OCI-LY7 (cell line): ENCODE measurements at regions of chr14 and their contacts with region 1.

Region 1: GRCh38 chr14:35301735-35302528 is 9.8 kb downstream of the PSMA6 start:
- DNase-seq: peak; percentile 31
- H3K4me3 ChIP-seq: peak overlapping the region; percentile 16
- H3K27ac ChIP-seq: peak overlapping the region; percentile 52
- H3K4me1 ChIP-seq: peaks cover 46% of the 10 kb centered on the region
- CTCF ChIP-seq: no peak

Region 2: DNA sequence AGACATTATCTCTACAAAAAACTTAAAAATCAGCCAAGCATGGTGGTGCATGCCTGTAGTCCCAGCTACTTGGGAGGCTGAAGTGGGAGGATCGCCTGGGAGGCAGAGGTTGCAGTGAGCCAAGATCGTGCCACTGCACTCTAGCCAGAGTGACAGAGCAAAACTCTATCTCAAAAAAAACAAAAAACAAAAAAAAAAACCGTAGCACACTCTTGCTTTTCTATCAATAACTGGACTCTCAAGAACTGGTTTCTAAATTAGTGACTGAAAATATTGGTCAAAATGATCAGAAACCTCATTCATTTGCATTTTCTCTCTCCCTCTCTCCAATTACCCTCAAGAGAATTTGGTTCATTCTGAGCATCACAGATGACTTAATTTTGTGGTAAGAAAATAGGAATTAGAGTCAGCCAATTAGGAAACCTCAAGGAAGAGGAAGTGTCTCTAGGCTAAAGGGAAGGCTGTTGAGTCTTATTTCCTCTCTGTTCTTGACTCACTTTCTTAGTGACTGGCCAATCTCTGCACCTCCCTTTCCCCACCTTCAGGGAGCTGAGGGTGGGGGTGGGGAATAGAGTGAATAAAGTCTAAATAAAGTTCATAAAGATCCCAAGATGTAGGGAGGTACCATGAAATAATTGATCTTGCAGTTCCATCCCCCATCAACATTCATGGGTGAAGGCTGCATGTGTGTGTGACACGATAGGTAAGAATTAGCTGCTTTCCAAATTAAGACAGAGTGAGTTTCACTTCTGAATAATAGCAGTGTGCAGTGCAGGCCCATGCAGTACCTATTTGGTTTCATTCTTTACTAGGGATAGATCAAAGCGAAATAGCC is 16.5 kb before region 1 on chr14:
- CTCF ChIA-PET with region 1: no interaction called
- POLR2A ChIA-PET with region 1: interaction called, 15 read pairs
- intact Hi-C with region 1: no loop called
- DNase-seq: peak; percentile 81
- H3K4me3 ChIP-seq: peak overlapping the region; percentile 59
- H3K27ac ChIP-seq: peak overlapping the region; percentile 99
- H3K4me1 ChIP-seq: peaks cover 81% of the 10 kb centered on the region
- CTCF ChIP-seq: no peak

Region 3: DNA sequence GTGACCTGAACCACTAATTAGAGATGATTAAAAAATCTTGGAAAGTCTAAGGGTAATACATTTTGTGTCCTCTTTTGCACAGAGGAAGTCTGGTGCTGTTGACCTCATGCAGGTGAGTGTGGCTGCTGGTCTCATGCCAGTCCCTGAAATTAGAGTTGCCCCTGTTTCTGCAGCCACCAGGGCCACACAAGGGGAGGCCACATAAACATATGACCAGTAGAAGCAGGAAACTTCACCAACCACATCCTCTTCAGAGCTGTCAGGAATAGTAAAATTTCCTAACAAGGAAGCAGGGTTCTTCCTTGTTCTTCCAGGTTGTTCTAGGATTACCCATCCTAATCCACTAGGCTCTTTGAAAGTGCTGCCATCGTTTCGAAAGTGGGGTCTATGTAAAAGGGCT is 18.5 kb after region 1 on chr14:
- CTCF ChIA-PET with region 1: no interaction called
- POLR2A ChIA-PET with region 1: interaction called, 17 read pairs
- intact Hi-C with region 1: no loop called
- DNase-seq: no peak
- H3K4me3 ChIP-seq: no peak overlapping the region
- H3K27ac ChIP-seq: no peak overlapping the region
- H3K4me1 ChIP-seq: no peaks in the 10 kb centered on the region
- CTCF ChIP-seq: no peak

Region 4: DNA sequence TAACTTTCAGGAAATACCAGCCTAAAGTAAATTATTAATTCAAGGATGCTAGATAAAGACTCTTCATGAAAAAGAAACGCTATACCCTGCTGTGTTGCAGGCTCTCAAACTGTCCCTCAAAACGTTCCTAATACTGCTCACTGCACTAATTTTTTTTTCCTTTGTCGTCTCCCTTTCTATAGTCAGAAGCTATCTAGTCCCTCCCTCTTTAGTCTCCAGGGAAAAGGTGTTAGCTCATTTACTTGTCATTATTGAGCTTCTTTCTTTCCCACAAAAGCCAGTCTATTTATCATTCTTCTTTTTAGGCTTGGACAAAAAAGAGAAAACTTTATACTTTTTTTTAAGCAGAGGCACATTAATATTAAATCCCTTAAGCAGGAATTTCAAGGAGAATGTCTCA is 201.7 kb after region 1 on chr14:
- CTCF ChIA-PET with region 1: no interaction called
- POLR2A ChIA-PET with region 1: no interaction called
- intact Hi-C with region 1: no loop called
- DNase-seq: no peak
- H3K4me3 ChIP-seq: no peak overlapping the region
- H3K27ac ChIP-seq: no peak overlapping the region
- H3K4me1 ChIP-seq: no peaks in the 10 kb centered on the region
- CTCF ChIP-seq: no peak